ENCODE measurements at regions of chr21 and their contacts with region 1.

Region 1: DNA sequence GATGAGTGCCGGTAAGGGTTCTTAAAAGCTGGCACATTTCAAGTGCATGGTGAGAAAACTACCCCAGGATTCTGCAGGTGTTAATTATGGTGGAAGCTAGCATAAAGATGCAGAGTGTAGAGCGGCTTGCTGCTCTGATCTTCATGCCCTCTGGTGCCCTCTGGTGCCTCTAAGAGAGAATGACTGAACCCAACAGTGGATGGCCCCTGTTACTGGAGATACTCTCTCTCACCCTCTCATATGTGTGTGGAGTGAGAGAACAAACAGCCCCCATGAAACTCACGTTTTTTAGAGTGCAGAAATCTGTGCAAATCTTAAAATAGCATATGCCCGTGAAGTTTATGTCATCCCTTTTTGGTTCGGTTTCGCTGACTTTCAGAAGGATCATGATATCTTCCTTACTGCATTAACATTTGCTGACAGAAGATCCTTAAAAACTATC is 90.0 kb downstream of the GRIK1 start:
- DNase-seq: peak; percentile 23
- H3K4me3 ChIP-seq: no peak overlapping the region
- H3K27ac ChIP-seq: no peak overlapping the region
- H3K4me1 ChIP-seq: no peaks in the 10 kb centered on the region
- H3K27me3 ChIP-seq: no peaks in the 10 kb centered on the region
- CTCF ChIP-seq: peak; percentile 65 to 93

Region 2: DNA sequence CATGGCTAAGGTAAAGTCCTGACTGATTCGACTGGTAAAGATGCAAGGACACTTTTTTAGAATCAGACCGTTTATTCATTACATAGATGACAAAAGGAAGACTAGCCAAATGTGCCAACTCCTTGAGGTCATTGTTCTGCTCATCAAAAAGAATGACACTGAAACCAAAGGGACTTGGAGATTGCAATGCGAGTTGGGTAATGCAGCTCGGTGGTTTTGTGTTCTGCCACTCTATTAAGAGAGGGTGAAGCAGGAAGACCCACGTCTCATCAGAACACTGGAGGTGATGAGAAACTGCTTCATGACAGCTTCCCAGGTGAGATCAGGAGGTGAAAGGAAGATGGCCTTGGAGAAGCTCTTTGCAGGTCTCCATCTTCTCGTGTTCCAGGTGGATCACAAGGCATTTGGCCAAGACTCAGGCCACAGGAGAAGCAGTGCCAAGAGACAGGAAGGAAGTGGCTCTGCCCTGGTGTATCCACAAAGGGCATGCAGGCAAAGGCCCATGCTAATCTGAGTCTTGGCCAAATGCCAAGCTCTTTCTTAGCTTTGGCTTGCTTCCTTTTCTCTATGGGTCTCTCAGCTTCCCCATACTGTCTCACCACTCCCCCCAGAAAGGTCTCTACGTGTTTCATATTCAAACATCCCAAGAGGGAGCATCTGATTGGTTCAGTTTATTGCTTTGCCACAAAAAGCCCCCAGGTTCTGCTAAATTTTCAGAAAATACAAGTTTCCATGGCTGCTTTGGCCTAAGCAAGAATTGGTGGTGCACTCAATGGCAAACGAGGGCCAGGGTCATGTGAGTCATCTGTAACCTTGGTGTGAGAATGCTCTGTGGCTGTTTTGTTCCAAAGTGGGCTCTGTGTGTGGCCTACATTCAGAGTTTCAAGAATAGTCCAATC is 770.6 kb before region 1 on chr21:
- CTCF ChIA-PET with region 1: no interaction called
- dilution Hi-C with region 1: no loop called
- in situ Hi-C with region 1: loop called in 1 of 2 experiments (anchors 25 kb)
- intact Hi-C with region 1: no loop called
- DNase-seq: no peak
- H3K4me3 ChIP-seq: no peak overlapping the region
- H3K27ac ChIP-seq: no peak overlapping the region
- H3K4me1 ChIP-seq: peaks cover 19% of the 10 kb centered on the region
- H3K27me3 ChIP-seq: no peaks in the 10 kb centered on the region
- CTCF ChIP-seq: no peak

Region 3: GRCh38 chr21:29372063-29372802 is 477.5 kb before region 1 on chr21:
- CTCF ChIA-PET with region 1: no interaction called
- dilution Hi-C with region 1: no loop called
- in situ Hi-C with region 1: no loop called
- intact Hi-C with region 1: loop called (anchors 2 kb)
- DNase-seq: peak; percentile 52
- H3K4me3 ChIP-seq: no peak overlapping the region
- H3K27ac ChIP-seq: no peak overlapping the region
- H3K4me1 ChIP-seq: no peaks in the 10 kb centered on the region
- H3K27me3 ChIP-seq: no peaks in the 10 kb centered on the region
- CTCF ChIP-seq: peak; percentile 56 to 72

Region 4: DNA sequence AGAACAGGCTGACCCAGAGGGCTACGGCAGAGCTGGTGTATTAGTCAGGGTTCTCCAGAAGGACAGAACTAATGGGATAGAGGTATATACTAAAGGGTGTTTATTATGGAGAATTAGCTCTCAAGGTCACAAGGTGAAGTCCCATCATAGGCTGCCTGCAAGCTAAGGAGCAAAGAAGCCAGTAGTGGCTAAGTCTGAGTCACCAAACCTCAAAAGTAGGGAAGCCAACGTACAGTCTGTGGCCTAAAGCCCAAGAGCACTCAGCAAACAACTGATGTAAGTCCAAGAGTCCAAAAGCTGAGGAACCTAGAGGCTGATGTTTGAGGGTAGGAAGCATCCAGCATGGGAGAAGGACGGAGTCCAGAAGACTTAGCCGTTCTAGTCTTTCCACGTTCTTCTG is 371.8 kb before region 1 on chr21:
- CTCF ChIA-PET with region 1: no interaction called
- dilution Hi-C with region 1: no loop called
- in situ Hi-C with region 1: loop called in 1 of 2 experiments (anchors 25 kb)
- intact Hi-C with region 1: loop called (anchors 1 kb)
- DNase-seq: peak; percentile 15
- H3K4me3 ChIP-seq: no peak overlapping the region
- H3K27ac ChIP-seq: no peak overlapping the region
- H3K4me1 ChIP-seq: peaks cover 14% of the 10 kb centered on the region
- H3K27me3 ChIP-seq: no peaks in the 10 kb centered on the region
- CTCF ChIP-seq: no peak

Region 5: DNA sequence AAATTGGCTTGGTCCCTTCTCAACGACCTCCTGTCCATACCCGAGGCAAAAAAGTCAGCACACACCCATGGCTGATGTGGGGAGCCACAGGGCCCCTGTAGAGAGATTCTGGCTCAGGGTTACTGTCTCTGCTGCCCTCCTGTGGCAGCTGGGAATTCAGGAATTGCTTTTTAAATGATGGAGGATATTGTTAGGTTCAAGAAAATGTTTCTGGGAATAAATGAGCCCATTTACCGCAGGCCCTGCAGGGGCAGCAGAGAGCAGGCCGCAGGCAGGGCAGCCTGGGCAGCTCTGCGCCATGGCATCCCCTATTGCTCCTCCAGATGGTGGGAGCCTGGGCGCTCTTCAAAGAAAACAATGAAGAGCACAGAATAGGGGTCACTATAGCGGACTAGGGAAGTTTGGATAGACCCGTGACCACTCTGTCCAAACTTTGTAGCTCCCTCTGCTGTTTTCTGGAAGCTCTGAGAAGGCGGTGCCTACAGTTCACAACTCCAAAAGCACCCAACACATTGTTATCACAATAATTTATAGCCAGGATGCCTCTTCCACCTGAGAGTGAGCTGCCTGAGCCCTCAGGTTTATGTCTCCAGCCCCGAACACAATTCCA is 349.9 kb before region 1 on chr21:
- CTCF ChIA-PET with region 1: interaction called, 8 read pairs
- dilution Hi-C with region 1: no loop called
- in situ Hi-C with region 1: loop called in 1 of 2 experiments (anchors 25 kb)
- intact Hi-C with region 1: loop called (anchors 1 kb)
- DNase-seq: peak; percentile 51
- H3K4me3 ChIP-seq: no peak overlapping the region
- H3K27ac ChIP-seq: no peak overlapping the region
- H3K4me1 ChIP-seq: no peaks in the 10 kb centered on the region
- H3K27me3 ChIP-seq: no peaks in the 10 kb centered on the region
- CTCF ChIP-seq: peak; percentile 67 to 78

Region 6: GRCh38 chr21:29718081-29718815 is 131.5 kb before region 1 on chr21:
- CTCF ChIA-PET with region 1: no interaction called
- dilution Hi-C with region 1: no loop called
- in situ Hi-C with region 1: no loop called
- intact Hi-C with region 1: loop called (anchors 5 kb)
- DNase-seq: peak; percentile 58
- H3K4me3 ChIP-seq: no peak overlapping the region
- H3K27ac ChIP-seq: no peak overlapping the region
- H3K4me1 ChIP-seq: no peaks in the 10 kb centered on the region
- H3K27me3 ChIP-seq: no peaks in the 10 kb centered on the region
- CTCF ChIP-seq: no peak

Measured in mammary epithelial cell (primary cell).